ENCODE measurements at regions of chr7 and their contacts with region 1.

Region 1: GRCh38 chr7:131581241-131582051 is 25.0 kb upstream of the PODXL start:
- DNase-seq: no peak
- H3K4me3 ChIP-seq: no peak overlapping the region
- H3K4me3 Mint-ChIP-seq: no peak overlapping the region
- H3K27ac Mint-ChIP-seq: no peak overlapping the region
- H3K4me1 ChIP-seq: peaks cover 24% of the 10 kb centered on the region
- H3K4me1 Mint-ChIP-seq: peaks cover 11% of the 10 kb centered on the region
- H3K27me3 ChIP-seq: no peaks in the 10 kb centered on the region
- H3K27me3 Mint-ChIP-seq: no peaks in the 10 kb centered on the region
- CTCF ChIP-seq: no peak

Region 2: GRCh38 chr7:131546583-131547111 is 34.8 kb before region 1 on chr7:
- CTCF ChIA-PET with region 1: interaction called, 7 read pairs
- POLR2A ChIA-PET with region 1: no interaction called
- intact Hi-C with region 1: loop called (anchors 5 kb)
- DNase-seq: peak in 1 of 2 experiments; percentile 69
- H3K4me3 ChIP-seq: no peak overlapping the region
- H3K4me3 Mint-ChIP-seq: no peak overlapping the region
- H3K27ac Mint-ChIP-seq: peak overlapping the region; percentile 1
- H3K4me1 ChIP-seq: peaks cover 21% of the 10 kb centered on the region
- H3K4me1 Mint-ChIP-seq: peaks cover 30% of the 10 kb centered on the region
- H3K27me3 ChIP-seq: no peaks in the 10 kb centered on the region
- H3K27me3 Mint-ChIP-seq: no peaks in the 10 kb centered on the region
- CTCF ChIP-seq: peak; percentile 77 to 80

Region 3: GRCh38 chr7:131556052-131556908 is 25.2 kb before region 1 on chr7 and contains the start of gene PODXL:
- CTCF ChIA-PET with region 1: interaction called, 4 read pairs
- POLR2A ChIA-PET with region 1: interaction called, 10 read pairs
- intact Hi-C with region 1: loop called (anchors 1 kb)
- DNase-seq: peak; percentile 73 to 83
- H3K4me3 ChIP-seq: peak within 1 kb of the TSS; percentile 91
- H3K4me3 Mint-ChIP-seq: peak within 1 kb of the TSS; percentile 94
- H3K27ac Mint-ChIP-seq: peak within 1 kb of the TSS; percentile 67
- H3K4me1 ChIP-seq: peaks cover 31% of the 10 kb centered on the region
- H3K4me1 Mint-ChIP-seq: peaks cover 34% of the 10 kb centered on the region
- H3K27me3 ChIP-seq: no peaks in the 10 kb centered on the region
- H3K27me3 Mint-ChIP-seq: no peaks in the 10 kb centered on the region
- CTCF ChIP-seq: no peak
- total RNA-seq, gene PODXL: 243 and 278 TPM in 2 replicates

Region 4: GRCh38 chr7:131604841-131605279 is 23.4 kb after region 1 on chr7:
- CTCF ChIA-PET with region 1: interaction called, 4 read pairs
- POLR2A ChIA-PET with region 1: interaction called, 11 read pairs
- intact Hi-C with region 1: loop called (anchors 1 kb)
- DNase-seq: no peak
- H3K4me3 ChIP-seq: no peak overlapping the region
- H3K4me3 Mint-ChIP-seq: no peak overlapping the region
- H3K27ac Mint-ChIP-seq: peak overlapping the region; percentile 81
- H3K4me1 ChIP-seq: peaks cover 97% of the 10 kb centered on the region
- H3K4me1 Mint-ChIP-seq: peaks cover 68% of the 10 kb centered on the region
- H3K27me3 ChIP-seq: no peaks in the 10 kb centered on the region
- H3K27me3 Mint-ChIP-seq: no peaks in the 10 kb centered on the region
- CTCF ChIP-seq: no peak

Region 5: DNA sequence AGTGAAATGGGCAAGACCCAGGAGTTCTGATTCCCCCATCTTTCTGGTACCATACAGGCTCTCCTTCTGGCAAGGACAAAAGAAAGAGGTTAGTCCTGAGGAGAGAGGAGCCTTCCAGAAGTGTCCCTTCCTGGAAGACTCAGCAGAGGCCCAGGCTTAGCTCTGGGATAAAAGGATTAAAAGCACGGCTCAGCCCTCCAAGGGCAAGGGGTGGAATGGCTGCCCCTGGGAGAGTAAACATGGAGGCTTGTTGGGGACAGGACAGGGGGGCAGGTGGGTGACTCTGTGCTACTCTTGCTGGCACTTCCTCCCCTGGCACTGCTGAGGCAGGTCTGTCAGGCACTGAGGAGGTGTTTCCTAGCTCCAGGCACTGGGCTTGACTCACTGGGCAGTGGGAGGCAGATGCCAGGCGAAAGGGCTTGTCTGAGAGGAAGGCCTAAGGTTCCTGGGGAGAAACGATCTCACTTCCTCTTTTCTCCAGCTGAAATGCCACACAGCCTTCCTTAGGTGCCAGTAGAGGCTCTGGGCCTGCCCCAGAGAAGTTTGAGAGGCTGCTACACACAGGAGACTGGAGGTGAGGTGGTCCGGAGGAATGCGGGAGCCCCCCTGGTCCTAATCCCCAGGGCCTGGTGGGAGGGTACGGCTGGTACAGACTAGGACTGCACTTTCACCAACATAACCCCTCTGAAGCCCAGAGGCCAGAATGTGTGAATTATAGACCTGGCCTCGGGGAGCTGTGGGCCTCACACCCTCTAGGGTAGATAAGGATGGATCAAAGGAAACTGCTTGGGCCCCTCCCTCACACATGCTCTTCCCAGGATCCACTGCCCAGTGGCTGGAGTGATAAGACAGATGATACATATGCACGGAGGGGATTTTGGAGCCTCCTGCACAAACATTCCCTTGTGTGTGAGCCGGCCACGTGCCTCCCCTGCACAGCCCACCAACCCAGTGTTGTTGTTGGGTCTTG is 38.2 kb after region 1 on chr7:
- CTCF ChIA-PET with region 1: interaction called, 8 read pairs
- POLR2A ChIA-PET with region 1: interaction called, 15 read pairs
- intact Hi-C with region 1: loop called (anchors 1 kb)
- DNase-seq: peak; percentile 90 to 96
- H3K4me3 ChIP-seq: no peak overlapping the region
- H3K4me3 Mint-ChIP-seq: peak overlapping the region; percentile 22
- H3K27ac Mint-ChIP-seq: peak overlapping the region; percentile 13
- H3K4me1 ChIP-seq: peaks cover 76% of the 10 kb centered on the region
- H3K4me1 Mint-ChIP-seq: peaks cover 50% of the 10 kb centered on the region
- H3K27me3 ChIP-seq: no peaks in the 10 kb centered on the region
- H3K27me3 Mint-ChIP-seq: no peaks in the 10 kb centered on the region
- CTCF ChIP-seq: no peak

Region 6: DNA sequence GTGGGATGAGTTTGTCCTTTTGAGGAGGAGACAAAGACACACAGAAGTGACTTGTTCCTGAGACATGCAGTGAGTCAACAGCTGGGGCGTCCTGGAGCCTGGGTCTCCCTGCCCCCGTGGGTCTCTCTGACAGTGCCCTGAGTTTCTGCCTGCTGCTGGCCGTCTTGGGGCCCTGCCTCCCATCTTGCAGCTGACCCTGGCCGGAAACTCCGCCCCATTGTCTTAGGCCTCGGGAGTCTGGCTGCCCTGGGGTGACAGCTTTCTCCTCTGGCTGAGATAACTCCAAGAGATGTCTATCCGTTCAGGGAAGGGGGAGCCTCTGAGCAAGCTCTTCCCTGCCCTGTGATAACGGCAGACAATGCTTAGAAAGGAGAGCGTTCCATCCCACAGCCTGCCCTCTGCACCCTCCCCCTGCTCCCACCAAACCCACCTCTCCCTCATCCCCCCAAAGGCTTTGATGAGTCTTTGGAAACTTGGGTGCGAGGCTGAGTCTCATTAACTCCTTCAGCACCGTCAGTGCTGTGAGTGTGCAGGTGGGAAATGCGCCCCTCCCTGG is 44.4 kb after region 1 on chr7:
- CTCF ChIA-PET with region 1: interaction called, 22 read pairs
- POLR2A ChIA-PET with region 1: interaction called, 15 read pairs
- intact Hi-C with region 1: no loop called
- DNase-seq: peak; percentile 95 to 97
- H3K4me3 ChIP-seq: no peak overlapping the region
- H3K4me3 Mint-ChIP-seq: peak overlapping the region; percentile 20
- H3K27ac Mint-ChIP-seq: peak overlapping the region; percentile 86
- H3K4me1 ChIP-seq: peaks cover 91% of the 10 kb centered on the region
- H3K4me1 Mint-ChIP-seq: peaks cover 64% of the 10 kb centered on the region
- H3K27me3 ChIP-seq: no peaks in the 10 kb centered on the region
- H3K27me3 Mint-ChIP-seq: no peaks in the 10 kb centered on the region
- CTCF ChIP-seq: peak; percentile 18 to 35

Region 7: DNA sequence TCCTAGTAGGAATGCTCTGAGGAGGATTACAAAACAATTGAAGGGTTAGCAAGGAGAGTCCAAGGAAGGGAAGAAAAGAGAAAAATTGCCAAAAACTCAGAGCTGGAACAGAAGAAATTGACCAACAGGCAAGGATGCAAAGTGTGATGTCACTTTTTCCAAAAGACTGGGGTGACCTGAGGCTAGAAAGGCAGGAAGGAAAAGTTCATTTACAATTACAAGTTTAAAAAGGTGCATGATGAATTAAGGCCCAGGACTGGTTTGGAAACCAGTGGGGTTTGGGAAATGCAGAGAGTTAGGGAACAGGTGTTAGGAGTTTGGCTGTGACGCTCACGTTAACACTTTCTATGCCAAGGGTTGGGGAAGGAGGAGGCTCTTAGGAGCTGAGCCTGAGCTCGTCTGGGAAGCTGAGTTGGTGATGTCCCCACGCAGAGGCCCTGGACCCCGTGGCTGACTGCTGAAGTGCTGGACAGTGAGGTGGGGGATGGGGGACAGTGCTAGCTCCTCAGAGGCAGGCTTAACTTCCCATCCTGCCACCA is 67.6 kb after region 1 on chr7:
- CTCF ChIA-PET with region 1: interaction called, 17 read pairs
- POLR2A ChIA-PET with region 1: interaction called, 24 read pairs
- intact Hi-C with region 1: loop called (anchors 1 kb)
- DNase-seq: peak; percentile 70 to 72
- H3K4me3 ChIP-seq: no peak overlapping the region
- H3K4me3 Mint-ChIP-seq: peak overlapping the region; percentile 43
- H3K27ac Mint-ChIP-seq: peak overlapping the region; percentile 85
- H3K4me1 ChIP-seq: peaks cover 67% of the 10 kb centered on the region
- H3K4me1 Mint-ChIP-seq: peaks cover 23% of the 10 kb centered on the region
- H3K27me3 ChIP-seq: no peaks in the 10 kb centered on the region
- H3K27me3 Mint-ChIP-seq: no peaks in the 10 kb centered on the region
- CTCF ChIP-seq: no peak